CD4-positive, alpha-beta T cell (primary cell): ENCODE measurements at regions of chr7 and their contacts with region 1.

Region 1: DNA sequence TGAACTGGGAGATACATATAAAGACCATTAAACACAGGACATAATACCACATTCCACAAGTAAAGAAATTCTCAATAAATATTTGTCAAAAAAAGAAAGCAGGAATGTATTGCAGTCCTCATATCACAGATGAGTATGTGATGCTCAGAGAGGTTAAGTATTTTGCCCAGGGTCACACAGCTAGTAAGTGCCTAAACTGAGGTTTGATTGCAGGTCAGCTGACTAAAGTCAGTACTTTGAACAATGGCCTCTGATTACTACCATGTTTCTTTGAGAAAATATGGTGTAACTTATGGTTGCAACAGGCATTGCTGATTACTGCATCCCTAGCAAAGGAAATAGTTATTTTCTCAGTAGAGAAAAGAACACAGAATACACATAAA is 267.1 kb downstream of the ELMO1 start:
- DNase-seq: no peak
- ATAC-seq: no peak
- H3K4me3 ChIP-seq: no peak overlapping the region
- H3K4me3 Mint-ChIP-seq: no peak overlapping the region
- H3K27ac ChIP-seq: no peak overlapping the region
- H3K27ac Mint-ChIP-seq: no peak overlapping the region
- H3K4me1 ChIP-seq: peaks cover 7% of the 10 kb centered on the region
- H3K4me1 Mint-ChIP-seq: peaks cover 10% of the 10 kb centered on the region
- H3K27me3 ChIP-seq: no peaks in the 10 kb centered on the region
- H3K27me3 Mint-ChIP-seq: no peaks in the 10 kb centered on the region
- CTCF ChIP-seq: no peak

Region 2: DNA sequence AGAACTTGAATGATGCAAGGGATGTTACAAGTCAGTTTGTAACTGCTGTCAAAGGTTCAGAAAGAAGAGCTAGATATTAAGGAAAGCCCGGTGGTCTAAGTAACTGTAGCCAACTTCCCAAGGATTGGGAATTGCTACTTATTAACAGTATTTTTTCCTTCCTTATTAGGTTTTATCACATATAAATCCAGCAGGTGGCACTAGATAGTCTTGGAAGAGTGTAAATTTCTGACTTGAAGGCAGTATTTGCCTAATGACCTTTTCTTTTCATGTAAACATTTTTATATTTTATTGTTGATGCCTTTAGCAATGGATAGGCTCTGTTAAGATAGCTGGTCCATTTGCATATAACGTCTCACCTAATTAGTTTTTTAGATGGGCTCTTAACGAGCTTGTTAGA is 740.7 kb before region 1 on chr7:
- CTCF ChIA-PET with region 1: interaction called, 9 read pairs
- POLR2A ChIA-PET with region 1: interaction called, 4 read pairs
- intact Hi-C with region 1: loop called in 1 of 2 experiments (anchors 5 kb)
- DNase-seq: peak in 3 of 14 experiments; percentile 10 to 19 (median 16)
- ATAC-seq: no peak
- H3K4me3 ChIP-seq: no peak overlapping the region
- H3K4me3 Mint-ChIP-seq: no peak overlapping the region
- H3K27ac ChIP-seq: no peak overlapping the region
- H3K27ac Mint-ChIP-seq: no peak overlapping the region
- H3K4me1 ChIP-seq: no peaks in the 10 kb centered on the region
- H3K4me1 Mint-ChIP-seq: no peaks in the 10 kb centered on the region
- H3K27me3 ChIP-seq: no peaks in the 10 kb centered on the region
- H3K27me3 Mint-ChIP-seq: no peaks in the 10 kb centered on the region
- CTCF ChIP-seq: peak; percentile 24

Region 3: DNA sequence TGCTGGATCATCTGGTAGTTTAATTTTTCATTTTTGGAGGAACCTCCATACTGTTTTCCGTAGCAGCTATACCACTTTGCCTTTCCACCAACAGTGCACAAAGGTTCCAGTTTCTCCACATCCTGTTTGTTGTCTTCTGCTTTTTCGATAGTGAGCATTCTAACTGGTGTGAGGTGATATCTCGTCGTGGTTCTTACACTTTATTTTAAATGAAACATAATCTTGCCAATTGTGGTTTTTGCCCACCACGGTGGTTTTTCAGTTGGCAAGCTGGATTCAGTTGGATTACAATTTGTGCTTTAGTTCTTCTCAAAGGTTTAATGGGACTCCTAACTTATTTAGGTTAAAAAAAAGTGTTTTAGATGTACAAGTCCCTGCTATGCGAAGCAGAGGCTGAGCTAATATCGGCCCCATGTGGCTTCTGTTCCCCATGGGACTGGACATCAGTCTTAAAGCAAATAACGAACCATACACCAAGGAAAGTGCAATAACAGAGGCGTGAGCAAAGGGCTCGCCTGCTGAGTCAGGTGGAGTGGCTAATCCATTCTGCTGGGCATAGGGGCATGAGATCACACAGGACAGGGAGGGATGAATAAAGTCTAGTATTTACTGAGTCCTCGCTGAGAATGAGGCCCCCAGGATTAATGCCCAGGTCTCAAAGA is 610.9 kb before region 1 on chr7:
- CTCF ChIA-PET with region 1: no interaction called
- POLR2A ChIA-PET with region 1: no interaction called
- intact Hi-C with region 1: no loop called
- DNase-seq: peak in 1 of 14 experiments; percentile 24
- ATAC-seq: no peak
- H3K4me3 ChIP-seq: no peak overlapping the region
- H3K4me3 Mint-ChIP-seq: no peak overlapping the region
- H3K27ac ChIP-seq: no peak overlapping the region
- H3K27ac Mint-ChIP-seq: peak overlapping the region; percentile 59
- H3K4me1 ChIP-seq: peaks cover 6% of the 10 kb centered on the region
- H3K4me1 Mint-ChIP-seq: peaks cover 5% of the 10 kb centered on the region
- H3K27me3 ChIP-seq: no peaks in the 10 kb centered on the region
- H3K27me3 Mint-ChIP-seq: no peaks in the 10 kb centered on the region
- CTCF ChIP-seq: no peak

Region 4: GRCh38 chr7:36686499-36686898 is 495.0 kb before region 1 on chr7:
- CTCF ChIA-PET with region 1: interaction called, 6 read pairs
- POLR2A ChIA-PET with region 1: interaction called, 5 read pairs
- intact Hi-C with region 1: loop called (anchors 1 to 2 kb)
- DNase-seq: peak in 7 of 14 experiments; percentile 12 to 64 (median 31)
- ATAC-seq: peak; percentile 73
- H3K4me3 ChIP-seq: no peak overlapping the region
- H3K4me3 Mint-ChIP-seq: no peak overlapping the region
- H3K27ac ChIP-seq: no peak overlapping the region
- H3K27ac Mint-ChIP-seq: no peak overlapping the region
- H3K4me1 ChIP-seq: peaks cover 7% of the 10 kb centered on the region
- H3K4me1 Mint-ChIP-seq: peaks cover 60% of the 10 kb centered on the region
- H3K27me3 ChIP-seq: no peaks in the 10 kb centered on the region
- H3K27me3 Mint-ChIP-seq: no peaks in the 10 kb centered on the region
- CTCF ChIP-seq: no peak

Region 5: DNA sequence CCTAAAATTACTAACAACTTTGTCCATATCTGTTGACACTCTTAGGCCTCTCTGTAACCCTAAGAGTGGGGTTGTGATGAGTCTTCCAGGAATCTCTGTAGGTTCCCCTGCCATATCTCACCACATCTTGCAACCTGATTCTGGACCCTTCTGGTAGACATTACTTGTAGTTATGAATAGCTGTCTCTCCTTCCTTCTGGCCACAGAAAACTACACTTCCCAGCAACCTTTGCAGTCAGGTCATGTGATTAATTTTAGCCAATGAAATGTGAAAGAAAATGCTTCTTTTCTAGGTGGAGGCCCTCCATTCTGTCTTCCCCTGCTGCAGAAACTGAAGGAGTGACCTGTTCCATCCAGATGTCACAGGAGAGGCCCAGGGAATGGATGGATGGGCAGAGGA is 309.7 kb before region 1 on chr7:
- CTCF ChIA-PET with region 1: no interaction called
- POLR2A ChIA-PET with region 1: no interaction called
- intact Hi-C with region 1: loop called in 1 of 2 experiments (anchors 10 kb)
- DNase-seq: peak in 3 of 14 experiments; percentile 25 to 34 (median 29)
- ATAC-seq: peak; percentile 46
- H3K4me3 ChIP-seq: no peak overlapping the region
- H3K4me3 Mint-ChIP-seq: no peak overlapping the region
- H3K27ac ChIP-seq: no peak overlapping the region
- H3K27ac Mint-ChIP-seq: peak overlapping the region; percentile 10
- H3K4me1 ChIP-seq: no peaks in the 10 kb centered on the region
- H3K4me1 Mint-ChIP-seq: peaks cover 9% of the 10 kb centered on the region
- H3K27me3 ChIP-seq: no peaks in the 10 kb centered on the region
- H3K27me3 Mint-ChIP-seq: no peaks in the 10 kb centered on the region
- CTCF ChIP-seq: no peak

Region 6: DNA sequence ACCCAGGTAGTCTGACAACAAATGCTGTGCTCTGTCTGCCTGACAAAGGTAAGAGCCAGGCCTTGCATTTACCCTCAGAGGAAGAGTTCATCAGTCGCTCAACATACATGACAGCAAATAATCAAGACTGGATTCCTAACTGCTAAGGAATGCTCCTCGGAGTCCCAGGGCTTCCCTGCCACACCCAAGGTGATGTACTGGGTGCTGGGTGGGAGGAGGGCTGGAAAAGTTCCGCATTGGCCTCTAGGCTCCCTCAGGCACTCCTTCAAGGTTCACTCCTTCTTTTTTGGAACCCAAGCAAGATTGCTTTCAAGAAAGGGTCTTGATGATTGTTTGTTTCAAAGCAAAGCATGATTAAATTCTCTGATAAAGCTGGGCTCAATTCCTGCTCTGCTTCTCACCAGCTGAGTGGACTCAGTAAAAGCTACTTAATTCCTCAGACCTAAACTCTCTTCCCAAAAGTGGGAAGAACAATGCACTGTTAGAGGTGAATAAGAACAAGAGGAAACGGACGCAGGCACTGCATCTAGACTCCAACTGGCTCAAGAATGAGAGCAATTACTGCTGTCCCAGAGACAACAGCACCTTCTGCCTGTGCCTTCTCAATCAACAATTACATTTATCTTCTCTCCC is 93.7 kb after region 1 on chr7:
- CTCF ChIA-PET with region 1: no interaction called
- POLR2A ChIA-PET with region 1: no interaction called
- intact Hi-C with region 1: no loop called
- DNase-seq: no peak
- ATAC-seq: no peak
- H3K4me3 ChIP-seq: no peak overlapping the region
- H3K4me3 Mint-ChIP-seq: no peak overlapping the region
- H3K27ac ChIP-seq: no peak overlapping the region
- H3K27ac Mint-ChIP-seq: peak overlapping the region; percentile 2
- H3K4me1 ChIP-seq: peaks cover 21% of the 10 kb centered on the region
- H3K4me1 Mint-ChIP-seq: peaks cover 54% of the 10 kb centered on the region
- H3K27me3 ChIP-seq: no peaks in the 10 kb centered on the region
- H3K27me3 Mint-ChIP-seq: no peaks in the 10 kb centered on the region
- CTCF ChIP-seq: no peak